Heart right ventricle (tissue), 16 donors: ENCODE measurements at regions of chr9 and their contacts with region 1.

Region 1: GRCh38 chr9:13427587-13427986 is 148.1 kb upstream of the MPDZ start:
- DNase-seq: peak in 1 of 2 donors; percentile 48
- ATAC-seq: peak in 7 of 8 donors; percentile 25 to 68 (median 48)
- H3K4me3 ChIP-seq: peak overlapping the region in 4 of 10 donors; percentile 3 to 26 (median 8)
- H3K27ac ChIP-seq: peak overlapping the region in 6 of 10 donors; percentile 25 to 62 (median 52)
- H3K4me1 ChIP-seq: peaks cover 0 to 32% (median 19%) of the 10 kb centered on the region in 9 donors
- H3K27me3 ChIP-seq: no peaks in the 10 kb centered on the region
- CTCF ChIP-seq: peak; percentile 58 to 90 (median 80)

Region 2: GRCh38 chr9:12813960-12814876 is 613.4 kb before region 1 on chr9:
- intact Hi-C with region 1: no loop called
- DNase-seq: peak; percentile 11 to 15
- ATAC-seq: peak in 7 of 8 donors; percentile 59 to 93 (median 84)
- H3K4me3 ChIP-seq: peak overlapping the region in 4 of 10 donors; percentile 1 to 31 (median 12)
- H3K27ac ChIP-seq: peak overlapping the region in 7 of 10 donors; percentile 17 to 67 (median 49)
- H3K4me1 ChIP-seq: peaks cover 0 to 54% (median 20%) of the 10 kb centered on the region in 9 donors
- H3K27me3 ChIP-seq: no peaks in the 10 kb centered on the region
- CTCF ChIP-seq: peak in 3 of 9 donors; percentile 26 to 47 (median 41)

Region 3: GRCh38 chr9:13213337-13213736 is 214.2 kb before region 1 on chr9:
- intact Hi-C with region 1: loop called in 1 of 10 experiments (anchors 10 kb)
- DNase-seq: no peak
- ATAC-seq: no peak
- H3K4me3 ChIP-seq: no peak overlapping the region
- H3K27ac ChIP-seq: no peak overlapping the region
- H3K4me1 ChIP-seq: peaks cover 0 to 28% (median 14%) of the 10 kb centered on the region in 9 donors
- H3K27me3 ChIP-seq: no peaks in the 10 kb centered on the region
- CTCF ChIP-seq: peak in 7 of 9 donors; percentile 31 to 54 (median 41)

Region 4: DNA sequence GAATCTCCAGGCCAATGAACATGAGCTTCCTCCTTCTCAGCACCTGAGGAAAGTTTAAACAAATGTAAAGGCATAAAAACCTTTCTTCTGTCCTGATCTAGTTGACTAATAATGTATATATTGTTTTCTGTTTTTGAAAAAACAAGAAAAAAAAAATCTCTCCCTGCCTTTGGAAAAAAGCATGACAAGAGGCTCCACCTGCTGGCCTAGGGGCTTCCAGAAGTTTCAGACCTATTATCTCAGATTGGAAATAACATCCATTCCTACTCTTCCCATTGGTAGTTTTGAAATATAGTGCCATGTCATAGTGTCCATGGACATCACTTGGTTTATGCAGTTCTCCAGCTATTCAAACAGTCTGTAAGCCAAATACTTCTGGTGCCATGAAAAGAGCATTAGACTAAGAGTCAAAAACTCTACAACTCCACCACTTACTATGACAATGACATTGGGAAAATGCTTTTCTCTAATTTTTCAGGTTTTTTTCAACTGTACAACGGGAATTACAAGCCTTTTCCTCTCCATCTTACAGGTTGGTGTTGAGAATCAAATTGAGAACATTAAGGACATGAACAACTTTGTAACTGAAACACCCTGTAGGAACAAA is 261.5 kb after region 1 on chr9:
- intact Hi-C with region 1: loop called in 5 of 10 experiments (anchors 5 to 10 kb)
- DNase-seq: peak in 1 of 2 donors; percentile 19
- ATAC-seq: peak in 3 of 8 donors; percentile 33 to 38 (median 34)
- H3K4me3 ChIP-seq: no peak overlapping the region
- H3K27ac ChIP-seq: peak overlapping the region in 4 of 10 donors; percentile 1 to 54 (median 30)
- H3K4me1 ChIP-seq: peaks cover 0 to 33% (median 13%) of the 10 kb centered on the region in 9 donors
- H3K27me3 ChIP-seq: no peaks in the 10 kb centered on the region
- CTCF ChIP-seq: peak; percentile 17 to 72 (median 54)

Region 5: DNA sequence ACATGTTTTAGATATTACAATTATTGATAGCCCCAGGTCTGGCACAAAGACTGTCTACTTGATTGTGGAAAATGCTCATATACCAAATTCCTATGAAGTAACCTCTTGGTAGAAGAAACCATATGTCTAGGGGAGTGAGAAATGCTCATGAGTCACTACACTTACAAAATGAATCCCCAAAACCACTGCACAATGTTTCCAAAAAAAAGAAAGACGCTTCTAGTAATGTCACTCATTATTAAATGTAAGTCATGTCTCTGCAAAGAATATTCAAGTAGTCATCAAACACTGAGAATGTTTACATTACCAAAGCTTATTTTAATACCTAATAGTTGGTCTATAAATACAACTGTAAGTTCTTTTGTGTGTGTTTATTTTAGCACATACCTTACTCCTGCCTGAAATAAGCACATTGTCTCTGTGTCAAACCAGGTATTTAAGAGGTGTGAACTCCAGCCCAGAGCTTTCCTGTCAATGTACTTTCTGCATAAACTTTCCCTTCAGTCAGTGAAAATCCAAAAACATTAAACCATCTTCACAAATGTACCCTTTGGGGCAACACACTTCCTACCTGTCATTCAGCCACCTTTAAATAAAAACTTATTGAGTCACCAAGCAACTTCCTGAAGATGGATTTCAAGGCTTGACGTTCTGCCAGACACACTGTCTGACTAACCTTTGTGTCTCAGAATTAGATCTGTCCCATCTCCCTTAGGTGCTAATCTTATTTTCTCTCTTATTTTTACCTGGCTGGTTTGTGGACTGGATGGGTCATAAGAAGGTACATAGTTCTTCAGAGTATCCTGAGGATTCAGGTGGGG is 692.3 kb after region 1 on chr9:
- intact Hi-C with region 1: loop called in 1 of 10 experiments (anchors 10 kb)
- DNase-seq: no peak
- ATAC-seq: no peak
- H3K4me3 ChIP-seq: no peak overlapping the region
- H3K27ac ChIP-seq: peak overlapping the region in 1 of 10 donors; percentile 32
- H3K4me1 ChIP-seq: peaks cover 0 to 5% (median 0%) of the 10 kb centered on the region in 9 donors
- H3K27me3 ChIP-seq: no peaks in the 10 kb centered on the region
- CTCF ChIP-seq: no peak

Region 6: GRCh38 chr9:14395317-14396082 is 967.9 kb after region 1 on chr9:
- intact Hi-C with region 1: loop called in 6 of 10 experiments (anchors 2 to 10 kb)
- DNase-seq: peak; percentile 21 to 54
- ATAC-seq: peak; percentile 47 to 85 (median 77)
- H3K4me3 ChIP-seq: peak overlapping the region in 3 of 10 donors; percentile 7 to 38 (median 23)
- H3K27ac ChIP-seq: peak overlapping the region in 6 of 10 donors; percentile 7 to 56 (median 52)
- H3K4me1 ChIP-seq: peaks cover 0 to 21% (median 9%) of the 10 kb centered on the region in 9 donors
- H3K27me3 ChIP-seq: no peaks in the 10 kb centered on the region
- CTCF ChIP-seq: no peak

Region 7: GRCh38 chr9:14428781-14429230 is 1001.2 kb after region 1 on chr9:
- intact Hi-C with region 1: loop called in 6 of 10 experiments (anchors 2 to 10 kb)
- DNase-seq: peak; percentile 64 to 81
- ATAC-seq: peak; percentile 65 to 87 (median 76)
- H3K4me3 ChIP-seq: no peak overlapping the region
- H3K27ac ChIP-seq: peak overlapping the region in 5 of 10 donors; percentile 10 to 65 (median 29)
- H3K4me1 ChIP-seq: peaks cover 6 to 30% (median 14%) of the 10 kb centered on the region in 9 donors
- H3K27me3 ChIP-seq: no peaks in the 10 kb centered on the region
- CTCF ChIP-seq: peak; percentile 67 to 87 (median 82)